CD4-positive, alpha-beta T cell (primary cell): ENCODE measurements at regions of chrX and their contacts with region 1.

Region 1: DNA sequence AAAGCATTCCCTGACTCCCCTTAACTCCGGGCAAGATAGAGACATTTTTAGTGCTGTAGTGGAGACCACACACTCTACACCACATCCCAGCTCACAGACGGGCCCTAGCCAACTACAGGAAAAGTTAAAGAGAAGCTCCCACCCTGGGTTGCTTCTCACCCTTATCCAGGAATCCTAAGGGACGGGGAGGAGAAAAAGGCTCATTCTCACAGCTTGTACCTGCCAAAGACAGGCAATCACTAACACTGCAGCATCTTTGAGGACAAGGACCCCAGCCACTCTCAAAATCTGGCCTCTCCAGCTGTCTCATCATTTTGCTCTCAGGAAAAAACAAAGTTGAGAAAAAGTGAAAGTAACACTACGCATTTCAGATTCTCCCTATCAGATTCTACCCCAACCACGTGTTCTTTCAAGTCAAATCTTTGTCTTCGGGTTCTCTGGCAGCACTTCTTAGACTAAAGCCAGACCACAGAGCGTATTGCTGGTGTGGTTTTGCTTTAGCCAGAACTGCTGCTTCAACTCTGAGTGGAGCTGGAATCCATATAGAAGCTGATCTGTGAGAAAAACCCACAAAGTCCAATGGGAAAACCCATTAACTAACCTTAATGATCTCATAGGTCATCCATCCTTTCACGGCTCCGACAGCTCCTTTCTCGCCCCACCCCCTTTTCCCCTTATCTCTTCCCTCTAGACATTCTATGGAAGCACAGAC is 605.9 kb upstream of the DIPK2B start:
- DNase-seq: peak in 12 of 14 experiments; percentile 7 to 87 (median 35)
- ATAC-seq: peak; percentile 84
- H3K4me3 ChIP-seq: peak overlapping the region; percentile 50
- H3K4me3 Mint-ChIP-seq: peak overlapping the region; percentile 90
- H3K27ac ChIP-seq: peak overlapping the region; percentile 67 to 82
- H3K27ac Mint-ChIP-seq: peak overlapping the region; percentile 93
- H3K4me1 ChIP-seq: peaks cover 24% of the 10 kb centered on the region
- H3K4me1 Mint-ChIP-seq: peaks cover 74% of the 10 kb centered on the region
- H3K27me3 ChIP-seq: no peaks in the 10 kb centered on the region
- H3K27me3 Mint-ChIP-seq: no peaks in the 10 kb centered on the region
- CTCF ChIP-seq: no peak

Region 2: GRCh38 chrX:45681891-45682290 is 124.7 kb before region 1 on chrX:
- CTCF ChIA-PET with region 1: no interaction called
- POLR2A ChIA-PET with region 1: no interaction called
- intact Hi-C with region 1: no loop called
- DNase-seq: no peak
- ATAC-seq: no peak
- H3K4me3 ChIP-seq: no peak overlapping the region
- H3K4me3 Mint-ChIP-seq: no peak overlapping the region
- H3K27ac ChIP-seq: no peak overlapping the region
- H3K27ac Mint-ChIP-seq: no peak overlapping the region
- H3K4me1 ChIP-seq: no peaks in the 10 kb centered on the region
- H3K4me1 Mint-ChIP-seq: no peaks in the 10 kb centered on the region
- H3K27me3 ChIP-seq: no peaks in the 10 kb centered on the region
- H3K27me3 Mint-ChIP-seq: no peaks in the 10 kb centered on the region
- CTCF ChIP-seq: no peak

Region 3: GRCh38 chrX:45769761-45770582 is 36.6 kb before region 1 on chrX:
- CTCF ChIA-PET with region 1: no interaction called
- POLR2A ChIA-PET with region 1: interaction called, 37 read pairs
- intact Hi-C with region 1: loop called in 1 of 2 experiments (anchors 1 kb)
- DNase-seq: peak in 7 of 14 experiments; percentile 6 to 78 (median 18)
- ATAC-seq: peak; percentile 25
- H3K4me3 ChIP-seq: peak overlapping the region; percentile 64
- H3K4me3 Mint-ChIP-seq: peak overlapping the region; percentile 93
- H3K27ac ChIP-seq: peak overlapping the region; percentile 63 to 71
- H3K27ac Mint-ChIP-seq: peak overlapping the region; percentile 97
- H3K4me1 ChIP-seq: peaks cover 32% of the 10 kb centered on the region
- H3K4me1 Mint-ChIP-seq: peaks cover 89% of the 10 kb centered on the region
- H3K27me3 ChIP-seq: no peaks in the 10 kb centered on the region
- H3K27me3 Mint-ChIP-seq: no peaks in the 10 kb centered on the region
- CTCF ChIP-seq: no peak

Region 4: DNA sequence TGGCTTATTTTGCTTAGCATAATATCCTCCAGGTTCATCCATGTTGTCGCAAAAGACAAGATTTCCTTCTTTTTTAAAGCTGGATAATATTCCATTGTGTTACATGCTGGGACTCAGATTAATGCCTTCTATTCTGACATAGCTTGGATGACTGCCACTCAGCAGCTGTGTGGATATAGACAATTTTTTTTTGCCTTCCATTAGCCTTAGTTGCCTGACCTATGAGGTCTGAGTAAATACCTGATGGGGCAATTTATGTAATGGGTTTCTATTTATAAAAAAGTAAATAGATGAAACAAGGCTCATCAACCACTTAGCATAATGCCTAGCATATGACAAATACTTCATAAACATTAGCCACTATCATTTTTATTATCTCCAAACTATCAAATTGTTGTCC is 223.2 kb after region 1 on chrX:
- CTCF ChIA-PET with region 1: no interaction called
- POLR2A ChIA-PET with region 1: no interaction called
- intact Hi-C with region 1: no loop called
- DNase-seq: no peak
- ATAC-seq: no peak
- H3K4me3 ChIP-seq: no peak overlapping the region
- H3K4me3 Mint-ChIP-seq: no peak overlapping the region
- H3K27ac ChIP-seq: no peak overlapping the region
- H3K27ac Mint-ChIP-seq: no peak overlapping the region
- H3K4me1 ChIP-seq: no peaks in the 10 kb centered on the region
- H3K4me1 Mint-ChIP-seq: no peaks in the 10 kb centered on the region
- H3K27me3 ChIP-seq: no peaks in the 10 kb centered on the region
- H3K27me3 Mint-ChIP-seq: no peaks in the 10 kb centered on the region
- CTCF ChIP-seq: no peak

Region 5: GRCh38 chrX:46236411-46236810 is 429.8 kb after region 1 on chrX:
- CTCF ChIA-PET with region 1: no interaction called
- POLR2A ChIA-PET with region 1: no interaction called
- intact Hi-C with region 1: no loop called
- DNase-seq: no peak
- ATAC-seq: no peak
- H3K4me3 ChIP-seq: no peak overlapping the region
- H3K4me3 Mint-ChIP-seq: no peak overlapping the region
- H3K27ac ChIP-seq: no peak overlapping the region
- H3K27ac Mint-ChIP-seq: no peak overlapping the region
- H3K4me1 ChIP-seq: no peaks in the 10 kb centered on the region
- H3K4me1 Mint-ChIP-seq: no peaks in the 10 kb centered on the region
- H3K27me3 ChIP-seq: no peaks in the 10 kb centered on the region
- H3K27me3 Mint-ChIP-seq: no peaks in the 10 kb centered on the region
- CTCF ChIP-seq: no peak